Activated CD4-positive, alpha-beta T cell treated with anti-CD3 and anti-CD28 coated beads, Interleukin-2, amount 10 ng/mL, durations not matched to agents 24 days and 14 days (primary cell): ENCODE measurements at regions of chr12 and their contacts with region 1.

Region 1: DNA sequence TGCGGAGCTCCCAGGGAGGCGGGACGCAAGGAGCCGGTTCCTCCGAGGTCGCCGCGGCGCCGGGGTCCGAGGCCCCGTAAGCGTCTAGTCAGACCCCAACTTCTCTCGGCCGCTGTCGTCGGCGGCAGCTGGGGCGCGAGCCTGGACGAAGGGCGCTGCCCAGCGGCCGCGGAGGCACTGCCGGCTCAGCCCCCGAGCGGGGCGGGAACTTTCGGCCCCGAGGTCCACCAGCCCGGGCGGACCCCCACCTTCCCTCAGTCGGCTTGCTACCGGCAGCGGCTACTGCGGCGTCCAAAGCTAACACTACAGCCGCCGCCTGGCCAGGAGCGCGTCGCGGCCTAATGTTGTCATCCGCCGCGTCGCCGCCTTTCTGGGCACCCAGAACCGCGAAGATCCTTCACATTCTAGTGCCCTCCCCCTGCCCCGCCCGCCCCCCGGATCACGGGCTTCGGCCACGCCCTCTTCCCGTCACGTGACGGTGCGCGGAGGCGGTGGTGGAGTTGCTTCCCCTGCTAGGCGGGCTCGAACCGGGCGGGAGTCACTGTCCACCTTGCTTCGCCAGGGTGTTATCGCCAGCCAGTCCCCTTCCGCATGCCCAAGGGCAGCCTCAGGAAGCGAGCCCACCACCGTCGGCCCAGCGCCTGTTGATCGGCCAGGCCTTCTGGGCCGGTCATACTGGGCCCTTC is at the start of gene OSBPL8:
- DNase-seq: peak; percentile 98
- H3K4me3 Mint-ChIP-seq: peak within 1 kb of the TSS; percentile 95
- H3K27ac Mint-ChIP-seq: peak within 1 kb of the TSS; percentile 99
- H3K4me1 Mint-ChIP-seq: peaks cover 38% of the 10 kb centered on the region
- H3K27me3 Mint-ChIP-seq: no peaks in the 10 kb centered on the region
- total RNA-seq, gene OSBPL8: 90.8 and 92.0 TPM in 2 replicates

Region 2: DNA sequence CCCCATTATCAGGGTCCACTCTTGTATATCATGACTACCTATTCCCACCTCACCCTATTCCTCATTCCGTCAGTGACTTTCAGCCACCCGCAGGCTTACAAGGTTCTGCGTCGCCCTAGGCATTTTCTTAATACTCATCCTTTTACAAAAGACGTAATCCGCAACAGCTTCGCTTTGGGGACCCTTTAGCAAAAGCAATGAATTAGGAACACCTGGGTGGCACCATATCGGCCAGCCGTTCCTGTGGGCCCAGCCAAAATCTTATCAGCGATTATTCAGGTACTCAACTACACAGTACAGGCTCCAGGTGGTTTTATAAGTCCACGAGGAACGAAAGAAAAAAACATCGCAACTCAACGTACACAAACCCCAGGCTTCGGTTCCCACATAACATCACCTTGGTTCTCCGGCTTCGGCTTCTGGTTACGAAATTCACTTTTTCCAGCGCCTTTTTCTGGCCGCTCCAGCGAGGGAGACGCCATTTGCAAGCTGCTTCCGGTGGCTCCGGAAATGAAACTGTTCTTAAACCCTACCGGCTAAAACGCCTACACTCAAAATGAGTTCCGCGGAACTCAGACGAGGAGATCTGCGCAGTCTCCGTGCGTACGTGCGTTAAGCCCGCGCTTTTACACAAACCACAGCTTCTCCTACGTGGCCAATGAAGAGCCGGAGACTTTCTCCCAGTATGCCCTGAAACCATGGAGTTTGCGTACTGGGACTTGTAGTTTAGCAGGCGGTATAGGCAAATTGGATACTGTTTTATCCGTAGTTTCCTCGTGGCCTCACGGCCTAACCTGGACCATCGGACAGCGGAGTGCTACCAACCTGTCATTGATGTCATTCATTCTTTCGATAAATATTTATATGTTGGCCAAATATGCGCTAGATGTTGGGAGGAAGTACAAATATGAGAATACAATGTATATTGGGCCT is 1048.2 kb before region 1 on chr12 and contains the start of gene KRR1:
- intact Hi-C with region 1: loop called (anchors 2 kb)
- DNase-seq: peak; percentile 97
- H3K4me3 Mint-ChIP-seq: peak within 1 kb of the TSS; percentile 98
- H3K27ac Mint-ChIP-seq: peak within 1 kb of the TSS; percentile 100
- H3K4me1 Mint-ChIP-seq: peaks cover 31% of the 10 kb centered on the region
- H3K27me3 Mint-ChIP-seq: peaks cover 3% of the 10 kb centered on the region
- total RNA-seq, gene KRR1: 134 and 141 TPM in 2 replicates

Region 3: GRCh38 chr12:76031537-76032073 is 527.9 kb before region 1 on chr12 and contains the start of gene PHLDA1:
- intact Hi-C with region 1: loop called (anchors 2 kb)
- DNase-seq: peak; percentile 98
- H3K4me3 Mint-ChIP-seq: peak within 1 kb of the TSS; percentile 99
- H3K27ac Mint-ChIP-seq: peak within 1 kb of the TSS; percentile 99
- H3K4me1 Mint-ChIP-seq: peaks cover 35% of the 10 kb centered on the region
- H3K27me3 Mint-ChIP-seq: peaks cover 2% of the 10 kb centered on the region
- total RNA-seq, gene PHLDA1: 59.6 and 60.7 TPM in 2 replicates

Region 4: DNA sequence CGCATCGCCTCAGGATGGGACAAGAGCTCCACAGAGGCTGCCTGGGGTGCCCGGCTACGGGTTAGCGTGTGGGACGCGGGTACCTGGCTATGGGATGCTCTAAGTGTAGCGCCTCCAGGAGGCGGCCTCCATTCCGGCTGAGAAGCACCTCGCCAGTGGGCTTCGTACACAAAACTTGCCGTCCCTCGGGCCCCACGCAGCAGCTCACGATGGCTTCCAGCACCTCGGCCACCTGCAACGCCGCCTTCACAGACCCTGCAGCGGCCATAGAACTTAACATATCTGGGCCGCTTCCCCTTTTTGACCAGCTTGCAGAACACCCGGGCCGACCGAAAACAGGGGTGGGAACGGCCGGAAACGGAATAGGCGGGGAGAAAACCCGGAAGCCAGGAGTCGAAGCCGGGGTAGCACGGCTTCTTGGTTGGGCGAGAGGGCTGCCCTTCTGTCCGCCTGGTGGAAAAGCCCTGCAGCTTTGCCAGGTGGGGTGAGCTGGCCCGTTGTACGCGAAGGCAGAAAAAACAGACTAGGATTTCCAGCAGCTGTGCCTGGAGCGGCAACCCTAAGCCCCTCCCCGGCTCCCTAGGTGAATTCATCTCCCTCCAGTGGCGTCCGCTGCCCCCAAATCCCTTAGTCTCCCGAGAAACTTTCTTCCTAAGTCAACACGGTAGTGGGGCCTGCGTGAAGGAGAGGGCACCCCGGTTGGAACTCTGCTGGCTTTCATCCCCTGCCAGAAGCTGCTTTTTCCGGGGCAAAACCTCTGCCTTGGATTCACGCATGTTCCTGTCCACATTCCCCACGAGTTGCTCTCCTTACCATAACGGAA is 211.3 kb before region 1 on chr12 and contains the start of gene BBS10:
- intact Hi-C with region 1: loop called (anchors 1 kb)
- DNase-seq: peak; percentile 96
- H3K4me3 Mint-ChIP-seq: peak within 1 kb of the TSS; percentile 97
- H3K27ac Mint-ChIP-seq: peak within 1 kb of the TSS; percentile 88
- H3K4me1 Mint-ChIP-seq: peaks cover 23% of the 10 kb centered on the region
- H3K27me3 Mint-ChIP-seq: no peaks in the 10 kb centered on the region
- total RNA-seq, gene BBS10: 3.8 and 4.7 TPM in 2 replicates

Region 5: DNA sequence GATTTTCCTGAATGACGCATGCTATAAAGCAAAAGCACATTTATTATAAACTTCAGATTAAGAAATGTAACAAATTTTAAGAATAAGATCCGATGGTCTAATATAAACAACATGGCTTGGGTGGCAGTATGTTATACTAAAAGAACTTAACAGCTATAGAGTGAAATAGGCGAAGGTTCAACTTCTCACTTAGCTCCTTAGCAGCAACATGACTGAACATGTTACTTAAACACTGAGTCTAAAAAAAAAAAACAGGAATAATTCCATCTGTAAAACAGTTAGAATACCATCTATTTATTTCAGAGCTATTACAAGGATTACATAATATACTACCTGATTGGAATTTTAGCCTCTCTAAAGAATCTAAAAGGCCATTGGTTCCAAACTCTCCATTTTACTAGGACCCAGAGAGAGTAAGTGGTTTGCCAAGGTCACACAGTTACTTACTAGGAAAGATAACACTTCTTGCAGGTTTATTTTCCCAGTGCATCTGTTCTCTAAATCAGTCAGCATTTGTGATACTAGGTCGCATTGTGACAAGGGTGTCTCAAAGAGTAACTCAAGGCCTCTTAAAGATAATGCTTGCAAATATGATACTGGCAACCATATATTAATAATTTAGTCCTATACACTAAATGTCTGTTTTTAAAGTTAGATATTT is 14.8 kb before region 1 on chr12:
- intact Hi-C with region 1: loop called (anchors 1 kb)
- DNase-seq: no peak
- H3K4me3 Mint-ChIP-seq: no peak overlapping the region
- H3K27ac Mint-ChIP-seq: no peak overlapping the region
- H3K4me1 Mint-ChIP-seq: peaks cover 41% of the 10 kb centered on the region
- H3K27me3 Mint-ChIP-seq: no peaks in the 10 kb centered on the region

Region 6: DNA sequence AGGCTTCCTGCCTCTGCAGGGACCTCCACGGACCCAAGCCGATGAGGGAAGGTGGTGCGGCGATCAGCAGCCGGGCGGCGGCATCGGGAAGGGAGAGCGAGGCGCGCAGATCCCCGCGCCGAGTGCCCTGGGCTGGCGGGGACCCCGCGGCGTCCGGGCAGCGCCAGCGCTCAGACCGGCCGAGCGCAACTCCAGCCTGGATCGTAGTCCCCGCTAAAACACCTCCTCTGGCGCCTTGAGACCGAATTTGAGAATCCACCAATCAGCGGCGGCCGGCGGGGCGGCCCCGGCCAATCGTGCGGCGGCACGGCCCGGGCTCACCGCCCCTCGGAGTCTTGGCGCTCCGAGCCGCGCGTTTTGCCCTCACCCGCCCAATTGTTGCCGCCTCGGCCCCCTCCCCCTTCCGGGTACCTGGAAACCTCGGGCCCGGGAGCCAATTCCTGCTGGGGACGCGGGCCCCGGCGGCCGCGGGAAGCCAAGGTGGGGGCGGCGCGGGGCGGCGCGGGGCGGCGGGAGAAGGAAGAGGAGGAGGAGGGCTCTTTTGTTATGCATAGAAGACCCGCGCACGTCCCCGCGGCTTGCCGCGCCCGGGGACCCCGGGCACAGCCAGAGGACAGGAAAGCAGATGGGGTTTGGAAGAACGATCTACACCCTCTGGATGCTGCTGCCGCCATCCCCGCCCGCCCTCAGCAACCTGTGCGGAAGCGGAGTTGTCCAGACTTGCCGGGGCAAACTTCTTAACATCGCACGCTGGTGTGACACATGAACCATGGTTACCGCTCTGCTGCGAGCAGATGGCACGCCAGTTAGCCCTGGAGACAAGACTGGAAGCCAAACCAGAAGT is 506.0 kb after region 1 on chr12 and contains the start of gene E2F7:
- intact Hi-C with region 1: loop called (anchors 1 kb)
- DNase-seq: peak; percentile 97
- H3K4me3 Mint-ChIP-seq: peak within 1 kb of the TSS; percentile 90
- H3K27ac Mint-ChIP-seq: peak within 1 kb of the TSS; percentile 80
- H3K4me1 Mint-ChIP-seq: peaks cover 34% of the 10 kb centered on the region
- H3K27me3 Mint-ChIP-seq: peaks cover 16% of the 10 kb centered on the region
- total RNA-seq, gene E2F7: 16.8 and 20.0 TPM in 2 replicates